HCT116 (cell line): ENCODE measurements at regions of chr17 and their contacts with region 1.

Region 1: DNA sequence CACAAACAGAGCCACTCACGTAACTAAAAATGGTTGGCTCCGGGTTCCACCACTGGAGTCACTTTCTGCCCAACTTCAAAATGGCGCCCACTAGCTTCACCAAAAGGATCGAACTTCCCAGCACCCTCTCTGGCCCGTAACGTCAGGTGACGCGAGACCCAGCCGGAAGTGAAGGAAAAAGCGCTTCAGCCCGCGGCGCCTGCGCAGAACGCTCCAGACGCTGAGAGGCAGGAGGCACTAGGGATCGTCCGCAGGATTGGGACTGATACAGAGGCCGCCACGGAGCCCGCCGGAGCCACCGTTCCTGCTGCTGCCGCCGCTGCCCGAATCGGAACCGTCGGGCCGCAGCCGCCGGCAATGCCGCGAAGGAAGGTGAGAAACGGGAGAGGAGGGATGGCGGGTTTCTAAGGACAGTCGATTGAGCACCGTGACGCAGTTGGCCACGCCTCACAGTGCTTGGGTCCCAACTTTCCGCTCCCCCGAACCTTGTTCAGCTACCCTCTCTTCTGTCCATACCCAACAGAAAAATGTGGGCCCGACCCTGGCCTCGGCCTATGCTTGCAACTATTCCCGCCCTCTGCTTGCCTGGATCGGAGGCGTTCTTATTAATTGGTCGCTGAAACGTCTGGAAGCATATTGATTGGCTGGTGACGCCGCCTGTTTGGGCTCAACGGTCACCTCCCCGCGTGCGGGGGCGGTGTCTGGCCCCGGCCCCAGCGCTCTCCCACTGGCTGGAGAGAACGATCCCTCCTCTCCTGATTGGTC is at the start of gene KAT7:
- DNase-seq: peak; percentile 100
- ATAC-seq: peak; percentile 93
- H3K4me3 ChIP-seq: peak within 1 kb of the TSS; percentile 86 to 96
- H3K27ac ChIP-seq: peak within 1 kb of the TSS; percentile 98
- H3K4me1 ChIP-seq: peaks cover 13 to 19% of the 10 kb centered on the region in 2 experiments
- H3K27me3 ChIP-seq: no peaks in the 10 kb centered on the region; the same call in 1 of the 2 replicates
- CTCF ChIP-seq: no peak
- POLR2A ChIP-seq: peak; percentile 82
- RAD21 ChIP-seq: no peak
- total RNA-seq, gene KAT7: 79.5 TPM

Region 2: GRCh38 chr17:49170216-49170615 is 618.4 kb before region 1 on chr17:
- CTCF ChIA-PET with region 1: no interaction called
- POLR2A ChIA-PET with region 1: no interaction called
- RAD21 ChIA-PET with region 1: no interaction called
- intact Hi-C with region 1: no loop called
- DNase-seq: no peak
- ATAC-seq: no peak
- H3K4me3 ChIP-seq: no peak overlapping the region
- H3K27ac ChIP-seq: no peak overlapping the region
- H3K4me1 ChIP-seq: no peaks in the 10 kb centered on the region
- H3K27me3 ChIP-seq: peaks cover 23% of the 10 kb centered on the region; the same call in 1 of the 2 replicates
- CTCF ChIP-seq: no peak
- POLR2A ChIP-seq: no peak
- RAD21 ChIP-seq: no peak

Region 3: DNA sequence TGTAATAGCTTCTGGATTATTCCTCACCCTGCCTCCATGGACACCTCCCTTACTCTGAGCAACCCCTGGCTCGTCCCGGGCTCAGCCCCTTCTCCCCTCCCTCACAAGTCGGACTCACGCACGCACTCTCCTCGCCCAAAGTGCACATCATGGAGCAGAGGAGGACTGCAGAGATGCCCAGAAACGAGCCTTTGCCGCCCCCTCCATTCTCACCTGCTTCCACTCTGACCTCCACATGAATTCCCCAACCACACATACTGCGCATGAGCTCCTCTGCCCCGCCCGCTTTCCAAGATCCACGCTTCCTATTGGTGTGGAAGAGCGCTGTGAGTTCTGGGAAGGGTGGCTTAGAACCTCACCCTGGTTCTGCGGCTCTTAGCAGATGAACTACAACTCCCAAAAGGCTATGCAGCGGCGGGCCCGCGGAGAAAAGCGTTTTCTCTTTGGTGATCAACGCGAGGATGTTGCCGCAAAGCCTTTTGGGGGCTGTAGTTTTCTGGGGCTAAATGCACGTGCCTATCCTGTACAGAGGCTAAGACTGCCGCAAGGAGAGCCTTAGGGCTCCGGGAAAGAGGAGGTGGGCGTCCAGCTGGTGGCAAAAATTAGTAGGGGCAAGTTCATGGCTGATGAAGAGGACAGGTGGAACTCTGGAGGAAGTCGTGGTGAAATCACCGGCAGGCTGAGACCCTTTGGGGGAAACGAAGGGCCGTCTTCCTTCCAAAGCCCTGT is 373.9 kb before region 1 on chr17 and contains the start of gene PHB1:
- CTCF ChIA-PET with region 1: no interaction called
- POLR2A ChIA-PET with region 1: no interaction called
- RAD21 ChIA-PET with region 1: no interaction called
- intact Hi-C with region 1: loop called (anchors 2 kb)
- DNase-seq: peak; percentile 98
- ATAC-seq: peak; percentile 97
- H3K4me3 ChIP-seq: peak within 1 kb of the TSS; percentile 84 to 88
- H3K27ac ChIP-seq: peak within 1 kb of the TSS; percentile 53
- H3K4me1 ChIP-seq: peaks cover 7 to 15% of the 10 kb centered on the region in 2 experiments; a peak in 3 of 4 replicates
- H3K27me3 ChIP-seq: no peaks in the 10 kb centered on the region
- CTCF ChIP-seq: no peak
- POLR2A ChIP-seq: peak; percentile 89
- RAD21 ChIP-seq: no peak
- total RNA-seq, gene PHB1: 534 TPM

Region 4: DNA sequence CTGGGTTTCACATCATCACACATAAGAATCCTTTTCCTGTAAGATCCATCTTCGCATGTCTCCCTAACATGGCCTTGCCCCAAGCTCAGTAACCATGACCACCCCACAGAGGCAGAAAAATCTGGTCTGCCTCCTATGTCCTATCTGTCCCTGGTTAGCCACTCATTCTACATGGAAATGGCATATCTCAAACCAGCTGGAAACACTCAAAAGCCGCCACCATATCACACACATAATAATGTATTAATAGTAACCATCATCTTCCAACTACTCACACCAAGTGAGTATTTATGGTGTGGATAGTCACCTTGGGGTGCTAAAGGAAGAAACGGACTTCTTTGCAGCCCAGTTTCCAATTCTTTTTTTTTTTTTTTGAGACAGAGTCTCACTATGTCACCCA is 36.2 kb before region 1 on chr17:
- CTCF ChIA-PET with region 1: no interaction called
- POLR2A ChIA-PET with region 1: no interaction called
- RAD21 ChIA-PET with region 1: no interaction called
- intact Hi-C with region 1: no loop called
- DNase-seq: no peak
- ATAC-seq: no peak
- H3K4me3 ChIP-seq: no peak overlapping the region
- H3K27ac ChIP-seq: no peak overlapping the region
- H3K4me1 ChIP-seq: no peaks in the 10 kb centered on the region
- H3K27me3 ChIP-seq: no peaks in the 10 kb centered on the region
- CTCF ChIP-seq: no peak
- POLR2A ChIP-seq: no peak
- RAD21 ChIP-seq: no peak

Region 5: DNA sequence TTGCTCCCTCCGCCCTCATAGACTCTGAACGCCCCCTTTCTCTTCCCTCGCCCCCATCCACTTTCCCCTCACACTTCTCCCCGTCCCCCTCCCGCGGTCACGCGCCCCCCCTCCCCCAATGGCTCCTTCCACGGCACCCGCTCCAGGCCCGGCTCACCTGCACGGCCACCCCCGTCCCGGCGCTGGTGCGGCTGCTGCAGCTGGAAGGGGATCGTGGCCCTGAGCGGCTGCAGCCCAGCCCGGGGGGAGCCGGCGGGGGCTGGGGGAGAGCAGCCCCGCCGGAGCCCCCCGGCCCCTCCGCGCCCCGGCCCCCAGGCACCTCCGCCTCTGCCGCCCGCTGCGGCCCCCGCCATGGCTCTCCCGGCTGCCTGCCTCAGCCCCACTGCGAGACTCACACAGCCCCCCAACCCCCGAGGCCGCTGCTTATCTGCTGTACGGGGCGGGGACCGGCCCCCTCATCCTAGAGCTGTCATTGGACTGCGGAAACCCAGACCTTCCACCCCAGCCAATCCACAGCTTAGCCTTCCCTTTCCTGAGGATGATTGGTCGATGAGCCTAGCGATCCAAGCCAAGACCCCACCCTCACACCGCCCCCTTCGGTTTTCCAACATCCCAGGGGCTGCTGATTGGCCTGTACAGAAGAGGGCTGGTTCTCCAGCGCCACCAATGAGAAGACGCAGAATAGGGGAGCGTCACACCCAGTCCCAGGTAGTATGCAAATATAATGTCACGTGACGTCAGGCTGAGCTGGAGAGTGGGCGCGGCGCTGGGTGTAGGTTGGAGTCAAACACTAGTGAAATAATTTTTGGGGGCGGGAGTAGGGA is 24.7 kb before region 1 on chr17 and contains the start of gene FAM117A:
- CTCF ChIA-PET with region 1: interaction called, 4 read pairs
- POLR2A ChIA-PET with region 1: interaction called, 28 read pairs
- RAD21 ChIA-PET with region 1: no interaction called
- intact Hi-C with region 1: no loop called
- DNase-seq: peak; percentile 100
- ATAC-seq: peak; percentile 97
- H3K4me3 ChIP-seq: peak within 1 kb of the TSS; percentile 58 to 61
- H3K27ac ChIP-seq: no peak within 1 kb of the TSS; the same call in 1 of the 2 replicates
- H3K4me1 ChIP-seq: peaks cover 8 to 12% of the 10 kb centered on the region in 2 experiments
- H3K27me3 ChIP-seq: peaks cover 17% of the 10 kb centered on the region
- CTCF ChIP-seq: no peak
- POLR2A ChIP-seq: peak; percentile 74
- RAD21 ChIP-seq: no peak
- total RNA-seq, gene FAM117A: 12.8 TPM